ENCODE measurements at regions of chr2 and their contacts with region 1.

Region 1: GRCh38 chr2:217785544-217786045 is 217.2 kb downstream of the TNS1 start:
- DNase-seq: peak; percentile 88 to 95
- H3K4me3 ChIP-seq: no peak overlapping the region
- H3K27ac ChIP-seq: no peak overlapping the region
- H3K4me1 ChIP-seq: peaks cover 10% of the 10 kb centered on the region
- H3K27me3 ChIP-seq: no peaks in the 10 kb centered on the region
- CTCF ChIP-seq: peak; percentile 92 to 97 (median 96)
- POLR2A ChIP-seq: no peak

Region 2: GRCh38 chr2:217743966-217744761 is 41.4 kb before region 1 on chr2:
- intact Hi-C with region 1: no loop called
- DNase-seq: peak in 1 of 2 donors; percentile 83
- H3K4me3 ChIP-seq: no peak overlapping the region
- H3K27ac ChIP-seq: no peak overlapping the region
- H3K4me1 ChIP-seq: peaks cover 10% of the 10 kb centered on the region
- H3K27me3 ChIP-seq: no peaks in the 10 kb centered on the region
- CTCF ChIP-seq: no peak
- POLR2A ChIP-seq: no peak

Region 3: GRCh38 chr2:217886720-217887309 is 101.2 kb after region 1 on chr2:
- intact Hi-C with region 1: loop called (anchors 5 kb)
- DNase-seq: no peak
- H3K4me3 ChIP-seq: no peak overlapping the region
- H3K27ac ChIP-seq: peak overlapping the region; percentile 3
- H3K4me1 ChIP-seq: peaks cover 26% of the 10 kb centered on the region
- H3K27me3 ChIP-seq: no peaks in the 10 kb centered on the region
- CTCF ChIP-seq: peak; percentile 77 to 90 (median 80)
- POLR2A ChIP-seq: no peak

Region 4: DNA sequence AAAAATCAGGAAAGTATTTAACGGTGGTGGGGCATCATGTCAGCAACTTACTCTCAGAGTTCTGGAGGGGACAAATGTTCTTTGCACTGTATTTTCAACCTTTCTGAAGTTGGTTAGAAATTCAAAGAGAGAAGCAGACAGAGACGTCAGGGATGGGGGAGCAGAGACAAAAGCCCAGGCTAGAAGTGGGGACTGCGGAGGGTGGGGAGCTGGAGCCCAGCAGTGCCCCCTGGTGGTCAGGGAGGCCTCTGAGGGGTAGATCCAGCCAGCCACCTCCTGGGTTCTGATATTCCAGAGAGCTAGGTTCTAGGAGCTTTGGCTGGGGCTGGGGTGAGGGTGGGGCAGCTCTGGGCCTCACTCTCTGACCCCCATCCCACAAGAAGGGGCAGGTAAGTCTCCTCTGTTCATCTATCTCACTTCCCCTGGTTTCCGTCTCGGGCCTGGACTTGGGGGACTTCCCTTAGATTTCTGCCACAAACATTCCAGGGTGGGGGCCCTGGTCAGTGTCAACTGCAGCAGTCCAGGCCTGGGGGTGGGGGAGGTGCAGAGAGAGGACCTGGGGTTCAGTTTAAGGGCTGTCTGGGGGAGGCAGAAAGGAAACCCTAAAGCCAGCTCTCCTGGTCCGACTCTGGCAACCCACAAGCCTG is 208.3 kb after region 1 on chr2:
- intact Hi-C with region 1: loop called (anchors 5 kb)
- DNase-seq: no peak
- H3K4me3 ChIP-seq: no peak overlapping the region
- H3K27ac ChIP-seq: peak overlapping the region; percentile 92
- H3K4me1 ChIP-seq: peaks cover 72% of the 10 kb centered on the region
- H3K27me3 ChIP-seq: no peaks in the 10 kb centered on the region
- CTCF ChIP-seq: peak; percentile 47 to 58 (median 58)
- POLR2A ChIP-seq: no peak

Region 5: DNA sequence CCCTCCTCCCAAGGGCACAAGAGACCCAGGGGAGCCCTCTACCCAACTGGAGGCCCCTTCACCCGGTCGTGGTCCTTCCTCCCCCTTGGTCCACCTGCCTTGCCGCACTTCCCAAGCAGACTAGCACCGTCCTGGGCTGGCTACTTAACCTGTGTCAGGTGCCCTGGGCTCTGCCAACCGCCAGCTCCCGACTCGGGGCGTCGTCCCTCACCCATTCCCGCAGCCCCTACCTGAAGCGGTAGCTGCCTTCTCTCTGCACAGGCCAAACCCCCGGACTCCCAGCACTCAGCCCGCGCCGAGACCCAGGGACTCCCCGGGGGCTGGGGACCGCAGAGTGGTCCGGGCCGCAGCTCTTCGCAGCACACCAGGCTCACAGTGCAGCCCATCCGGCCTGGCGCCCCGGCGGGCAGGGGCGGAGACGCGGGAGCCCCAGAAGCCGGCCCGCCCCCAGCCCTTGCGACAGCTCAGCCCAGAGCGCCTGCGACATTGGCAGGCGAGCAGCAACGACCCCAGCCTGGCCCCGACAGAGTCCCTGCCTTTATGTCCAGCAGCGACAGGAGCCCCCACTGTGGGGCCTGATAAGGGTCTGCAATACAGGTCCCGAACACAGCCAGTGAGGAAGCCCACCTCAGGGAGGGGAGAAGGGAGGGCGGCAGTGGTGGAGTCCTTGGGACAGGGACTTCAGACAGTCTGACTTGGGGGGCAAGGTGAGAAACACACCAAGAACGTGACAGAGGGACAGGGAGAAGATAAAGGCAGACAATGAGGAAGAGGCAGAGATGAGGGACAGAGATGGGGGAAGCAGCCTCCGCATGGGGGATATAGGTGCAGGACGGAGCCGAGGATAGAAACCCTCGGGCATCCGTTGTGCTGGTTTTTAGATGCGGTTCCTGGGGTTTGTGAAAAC is 248.2 kb after region 1 on chr2:
- intact Hi-C with region 1: loop called (anchors 5 kb)
- DNase-seq: no peak
- H3K4me3 ChIP-seq: no peak overlapping the region
- H3K27ac ChIP-seq: no peak overlapping the region
- H3K4me1 ChIP-seq: peaks cover 17% of the 10 kb centered on the region
- H3K27me3 ChIP-seq: no peaks in the 10 kb centered on the region
- CTCF ChIP-seq: no peak
- POLR2A ChIP-seq: no peak

Measured in vagina (tissue), 2 donors.